ENCODE measurements at regions of chr19 and their contacts with region 1.

Region 1: DNA sequence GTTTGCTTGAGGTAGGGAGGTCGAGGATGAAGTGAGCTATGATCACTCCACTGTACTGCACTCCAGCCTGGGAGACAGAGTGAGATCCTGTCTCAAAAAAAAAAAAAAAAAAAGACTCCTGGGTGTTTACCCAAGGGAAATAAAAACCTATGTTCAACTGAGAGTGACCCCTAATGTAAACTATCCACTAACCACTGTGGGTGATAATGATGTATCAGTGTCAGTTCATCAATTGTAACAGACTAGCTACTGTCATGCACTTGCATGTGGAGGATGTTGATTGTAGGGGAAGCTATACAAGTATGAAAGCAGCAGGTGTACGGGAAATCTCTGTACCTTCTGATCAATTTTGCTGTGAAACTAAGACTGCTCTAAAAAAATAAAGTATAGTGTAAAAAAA is 2.6 kb upstream of the CIB3 start:
- DNase-seq: no peak
- ATAC-seq: no peak
- H3K4me3 ChIP-seq: no peak overlapping the region
- H3K4me3 Mint-ChIP-seq: no peak overlapping the region
- H3K27ac ChIP-seq: no peak overlapping the region
- H3K27ac Mint-ChIP-seq: no peak overlapping the region
- H3K4me1 ChIP-seq: peaks cover 5 to 16% of the 10 kb centered on the region in 2 donors
- H3K4me1 Mint-ChIP-seq: peaks cover 14% of the 10 kb centered on the region
- H3K27me3 ChIP-seq: no peaks in the 10 kb centered on the region
- H3K27me3 Mint-ChIP-seq: no peaks in the 10 kb centered on the region
- CTCF ChIP-seq: no peak

Region 2: GRCh38 chr19:16041299-16041990 is 134.5 kb before region 1 on chr19:
- CTCF ChIA-PET with region 1: interaction called, 47 read pairs
- POLR2A ChIA-PET with region 1: no interaction called
- intact Hi-C with region 1: no loop called
- DNase-seq: peak; percentile 80
- ATAC-seq: peak; percentile 86
- H3K4me3 ChIP-seq: no peak overlapping the region
- H3K4me3 Mint-ChIP-seq: no peak overlapping the region
- H3K27ac ChIP-seq: no peak overlapping the region
- H3K27ac Mint-ChIP-seq: no peak overlapping the region
- H3K4me1 ChIP-seq: peaks cover 7 to 8% of the 10 kb centered on the region in 2 donors
- H3K4me1 Mint-ChIP-seq: peaks cover 10% of the 10 kb centered on the region
- H3K27me3 ChIP-seq: peaks cover 0 to 4% (median 0%) of the 10 kb centered on the region in 4 experiments
- H3K27me3 Mint-ChIP-seq: no peaks in the 10 kb centered on the region
- CTCF ChIP-seq: peak; percentile 95

Region 3: DNA sequence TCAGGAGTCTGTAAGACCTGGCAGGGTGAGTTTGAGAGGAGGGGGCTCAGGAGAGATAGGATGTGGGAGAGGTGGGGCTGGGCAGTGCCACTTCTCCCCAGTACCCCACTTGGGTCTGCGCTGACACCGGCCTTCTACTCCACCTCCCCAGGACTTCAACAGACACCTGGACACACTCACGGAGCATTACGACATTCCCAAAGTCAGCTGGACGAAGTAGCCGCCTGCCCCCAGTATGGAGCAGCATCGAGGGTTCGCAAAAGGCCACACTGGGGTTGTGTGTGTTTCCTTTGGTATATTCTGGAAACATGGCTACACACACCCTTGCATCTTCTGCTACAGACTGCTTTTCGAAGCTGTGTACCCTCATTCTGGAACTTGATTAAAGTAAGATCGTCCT is 14.8 kb after region 1 on chr19:
- CTCF ChIA-PET with region 1: no interaction called
- POLR2A ChIA-PET with region 1: no interaction called
- intact Hi-C with region 1: no loop called
- DNase-seq: no peak
- ATAC-seq: no peak
- H3K4me3 ChIP-seq: no peak overlapping the region
- H3K4me3 Mint-ChIP-seq: no peak overlapping the region
- H3K27ac ChIP-seq: no peak overlapping the region
- H3K27ac Mint-ChIP-seq: no peak overlapping the region
- H3K4me1 ChIP-seq: peaks cover 10 to 17% of the 10 kb centered on the region in 2 donors
- H3K4me1 Mint-ChIP-seq: peaks cover 21% of the 10 kb centered on the region
- H3K27me3 ChIP-seq: no peaks in the 10 kb centered on the region
- H3K27me3 Mint-ChIP-seq: no peaks in the 10 kb centered on the region
- CTCF ChIP-seq: no peak

Region 4: GRCh38 chr19:16247353-16248182 is 71.6 kb after region 1 on chr19:
- CTCF ChIA-PET with region 1: no interaction called
- POLR2A ChIA-PET with region 1: no interaction called
- intact Hi-C with region 1: no loop called
- DNase-seq: peak; percentile 88
- ATAC-seq: peak; percentile 88
- H3K4me3 ChIP-seq: no peak overlapping the region
- H3K4me3 Mint-ChIP-seq: peak overlapping the region; percentile 59
- H3K27ac ChIP-seq: peak overlapping the region; percentile 4 to 66
- H3K27ac Mint-ChIP-seq: peak overlapping the region; percentile 88
- H3K4me1 ChIP-seq: peaks cover 34 to 60% of the 10 kb centered on the region in 2 donors
- H3K4me1 Mint-ChIP-seq: peaks cover 34% of the 10 kb centered on the region
- H3K27me3 ChIP-seq: no peaks in the 10 kb centered on the region
- H3K27me3 Mint-ChIP-seq: no peaks in the 10 kb centered on the region
- CTCF ChIP-seq: peak; percentile 87

Region 5: GRCh38 chr19:16324384-16325160 is 148.6 kb after region 1 on chr19 and contains the start of gene KLF2:
- CTCF ChIA-PET with region 1: no interaction called
- POLR2A ChIA-PET with region 1: no interaction called
- intact Hi-C with region 1: no loop called
- DNase-seq: peak; percentile 99
- ATAC-seq: peak; percentile 59
- H3K4me3 ChIP-seq: peak within 1 kb of the TSS; percentile 35 to 100 (median 98)
- H3K4me3 Mint-ChIP-seq: peak within 1 kb of the TSS; percentile 76
- H3K27ac ChIP-seq: peak within 1 kb of the TSS; percentile 99
- H3K27ac Mint-ChIP-seq: peak within 1 kb of the TSS; percentile 91
- H3K4me1 ChIP-seq: peaks cover 42 to 55% of the 10 kb centered on the region in 2 donors
- H3K4me1 Mint-ChIP-seq: peaks cover 61% of the 10 kb centered on the region
- H3K27me3 ChIP-seq: no peaks in the 10 kb centered on the region
- H3K27me3 Mint-ChIP-seq: no peaks in the 10 kb centered on the region
- CTCF ChIP-seq: no peak
- total RNA-seq, gene KLF2: 241 and 242 TPM in 2 replicates

Measured in B cell (primary cell).